Ascending aorta (tissue), 2 donors: ENCODE measurements at regions of chr12 and their contacts with region 1.

Region 1: GRCh38 chr12:40010899-40011774 is 94.7 kb downstream of the SLC2A13 start:
- DNase-seq: peak; percentile 9 to 77
- H3K4me3 ChIP-seq: peak overlapping the region; percentile 31 to 48
- H3K27ac ChIP-seq: peak overlapping the region in 1 of 2 donors; percentile 13
- H3K4me1 ChIP-seq: peaks cover 0 to 4% of the 10 kb centered on the region in 2 donors
- H3K27me3 ChIP-seq: no peaks in the 10 kb centered on the region
- CTCF ChIP-seq: peak; percentile 55 to 79 (median 64)

Region 2: DNA sequence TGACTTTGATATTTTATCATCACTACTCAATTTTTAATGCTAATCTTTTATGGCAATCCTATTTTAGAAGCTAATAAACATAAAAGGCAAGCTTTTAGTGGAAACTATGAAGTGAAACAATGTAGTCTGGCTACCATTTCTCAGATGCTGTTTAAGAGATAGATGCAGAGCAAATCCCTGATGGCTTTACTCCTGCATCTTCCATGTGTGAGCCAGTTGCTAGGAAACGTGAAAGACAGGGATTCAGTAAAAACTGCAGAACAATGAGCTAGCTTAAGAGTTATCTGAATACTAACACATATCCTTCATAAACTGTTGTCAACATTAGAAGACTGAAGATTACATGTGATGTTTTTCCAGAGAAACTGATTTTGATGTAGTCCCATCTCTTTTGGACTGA is 17.9 kb before region 1 on chr12:
- intact Hi-C with region 1: no loop called
- DNase-seq: no peak
- H3K4me3 ChIP-seq: no peak overlapping the region
- H3K27ac ChIP-seq: no peak overlapping the region
- H3K4me1 ChIP-seq: no peaks in the 10 kb centered on the region
- H3K27me3 ChIP-seq: no peaks in the 10 kb centered on the region
- CTCF ChIP-seq: no peak

Region 3: GRCh38 chr12:40054554-40055227 is 43.6 kb after region 1 on chr12:
- intact Hi-C with region 1: loop called (anchors 5 kb)
- DNase-seq: peak in 1 of 2 donors; percentile 66
- H3K4me3 ChIP-seq: no peak overlapping the region
- H3K27ac ChIP-seq: no peak overlapping the region
- H3K4me1 ChIP-seq: no peaks in the 10 kb centered on the region
- H3K27me3 ChIP-seq: no peaks in the 10 kb centered on the region
- CTCF ChIP-seq: no peak